Activated CD4-positive, alpha-beta memory T cell treated with anti-CD3 and anti-CD28 coated beads, Interleukin-2, amount 10 ng/mL, durations not matched to agents 7 days and 5 days (primary cell): ENCODE measurements at regions of chr14 and their contacts with region 1.

Region 1: GRCh38 chr14:21136024-21136423 is 19.8 kb downstream of the OR5AU1 start:
- DNase-seq: no peak
- H3K4me3 Mint-ChIP-seq: no peak overlapping the region
- H3K27ac Mint-ChIP-seq: no peak overlapping the region
- H3K4me1 Mint-ChIP-seq: no peaks in the 10 kb centered on the region
- H3K27me3 Mint-ChIP-seq: peaks cover 4% of the 10 kb centered on the region

Region 2: GRCh38 chr14:21121106-21121505 is 14.9 kb before region 1 on chr14:
- CTCF ChIA-PET with region 1: interaction called, 13 read pairs
- POLR2A ChIA-PET with region 1: no interaction called
- DNase-seq: no peak
- H3K4me3 Mint-ChIP-seq: no peak overlapping the region
- H3K27ac Mint-ChIP-seq: no peak overlapping the region
- H3K4me1 Mint-ChIP-seq: peaks cover 11% of the 10 kb centered on the region
- H3K27me3 Mint-ChIP-seq: peaks cover 13% of the 10 kb centered on the region